MCF 10A (cell line): ENCODE measurements at regions of chr11 and their contacts with region 1.

Region 1: DNA sequence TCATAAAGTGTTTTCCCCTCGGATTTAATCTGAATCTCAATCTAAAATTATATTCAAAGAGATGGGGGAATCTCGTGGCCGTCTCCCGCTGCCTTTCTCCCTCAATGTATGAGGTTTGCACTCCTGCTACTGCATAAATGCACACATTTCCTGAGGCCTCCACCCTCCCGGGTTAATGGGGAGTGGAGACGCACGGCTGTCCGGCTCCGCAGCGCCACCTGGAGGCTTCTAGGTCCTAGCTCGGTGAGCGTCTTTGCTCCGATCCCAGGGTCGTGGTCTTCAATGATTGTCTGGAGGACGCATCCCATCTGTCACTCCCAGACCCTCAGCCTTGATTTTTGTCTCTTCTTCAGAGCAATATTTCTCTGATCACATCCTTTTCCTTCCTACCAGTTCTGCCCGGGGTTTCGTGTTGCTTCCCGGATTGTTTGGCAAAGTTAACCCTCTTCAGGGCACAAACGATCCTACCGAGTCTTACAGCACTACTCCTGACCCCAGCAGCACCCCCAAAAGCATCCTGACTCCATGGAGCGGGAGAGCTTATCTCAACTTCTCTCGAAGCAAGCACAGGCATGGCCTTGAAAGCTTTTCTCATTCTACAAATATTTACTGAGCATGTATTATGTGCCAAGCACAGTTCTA is at the start of gene LMO1:
- DNase-seq: peak; percentile 79
- H3K4me3 Mint-ChIP-seq: peak within 1 kb of the TSS; percentile 61
- H3K27ac Mint-ChIP-seq: no peak within 1 kb of the TSS
- H3K4me1 Mint-ChIP-seq: peaks cover 12% of the 10 kb centered on the region
- H3K27me3 Mint-ChIP-seq: peaks cover 12% of the 10 kb centered on the region
- CTCF ChIP-seq: peak; percentile 86
- total RNA-seq, gene LMO1: not detected in 2 replicates

Region 2: DNA sequence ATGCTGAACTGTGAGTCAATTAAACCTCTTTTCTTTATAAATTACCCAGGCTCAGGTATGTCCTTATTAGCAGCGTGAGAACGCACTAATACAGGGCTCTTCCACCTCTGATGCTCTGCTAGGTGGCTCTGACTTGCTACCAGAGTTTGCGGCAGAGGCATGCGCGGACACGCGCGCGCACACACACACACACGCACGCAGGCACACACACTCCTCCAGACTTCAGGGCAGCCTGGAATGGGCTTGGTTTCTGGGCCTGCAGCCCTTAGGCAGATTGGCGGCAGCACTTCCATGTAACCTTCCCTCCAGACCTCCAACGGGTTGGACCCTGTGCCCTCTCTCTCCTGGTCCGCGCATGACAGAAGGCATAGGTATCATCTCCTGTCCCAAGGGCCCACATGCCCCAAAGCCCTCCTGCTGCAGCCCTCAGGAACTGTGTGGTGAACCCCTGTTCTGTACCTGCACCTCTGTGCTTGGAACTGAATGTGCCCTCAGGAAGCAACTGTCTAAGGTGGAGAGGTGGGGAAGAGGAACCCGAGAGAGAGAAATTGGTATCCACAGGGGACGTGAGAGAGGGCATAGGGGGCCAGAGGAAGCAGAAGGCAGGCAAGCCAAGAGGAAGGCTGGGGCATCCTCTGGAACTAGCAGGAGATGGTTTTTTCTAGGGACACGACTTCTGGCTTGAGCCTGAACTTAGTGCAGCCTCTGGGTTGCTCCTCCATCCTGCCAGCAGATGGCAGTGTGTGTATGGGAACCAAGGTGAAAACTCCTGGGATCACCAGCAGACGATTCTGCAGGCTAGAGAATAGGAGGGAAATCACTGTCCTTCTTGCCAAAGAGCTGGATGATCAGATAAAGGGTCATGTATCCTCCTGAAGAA is 71.6 kb before region 1 on chr11:
- CTCF ChIA-PET with region 1: interaction called, 18 read pairs
- POLR2A ChIA-PET with region 1: no interaction called
- intact Hi-C with region 1: loop called (anchors 2 kb)
- DNase-seq: peak; percentile 75
- H3K4me3 Mint-ChIP-seq: no peak overlapping the region
- H3K27ac Mint-ChIP-seq: no peak overlapping the region
- H3K4me1 Mint-ChIP-seq: no peaks in the 10 kb centered on the region
- H3K27me3 Mint-ChIP-seq: peaks cover 36% of the 10 kb centered on the region
- CTCF ChIP-seq: peak; percentile 84

Region 3: DNA sequence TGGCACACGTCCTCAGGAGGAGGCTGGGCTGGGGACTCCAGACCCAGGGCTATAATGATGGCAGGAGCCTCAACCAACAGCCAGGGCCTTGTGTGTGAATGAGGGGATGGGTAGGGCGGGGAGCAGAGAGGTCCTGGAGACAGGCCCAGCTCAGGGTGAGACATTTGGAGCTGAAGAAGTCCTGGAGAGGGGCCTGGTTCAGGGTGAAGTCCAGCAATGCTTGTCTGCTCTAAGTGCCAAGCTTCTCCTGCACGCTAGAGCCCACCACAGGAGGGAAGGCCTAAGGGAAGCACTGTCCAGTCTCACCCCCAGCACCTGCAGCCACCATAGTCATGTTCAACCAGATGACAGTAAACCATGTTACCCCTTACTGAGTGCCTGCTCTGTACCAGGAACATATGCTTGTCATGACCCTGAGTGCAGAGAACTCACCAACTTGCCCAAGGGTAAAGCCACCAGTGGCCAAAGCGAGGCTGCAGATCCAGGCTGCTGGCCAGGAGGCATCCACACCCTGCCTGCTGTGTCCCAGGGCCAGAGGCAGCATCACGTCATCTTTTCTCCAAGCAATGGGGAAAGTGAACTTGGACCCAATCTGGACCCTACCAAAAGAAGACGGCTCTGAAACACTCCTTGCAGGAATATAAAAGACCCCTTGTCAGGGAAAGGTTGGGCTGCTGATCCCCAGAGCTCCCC is 24.2 kb before region 1 on chr11:
- CTCF ChIA-PET with region 1: interaction called, 398 read pairs
- POLR2A ChIA-PET with region 1: interaction called, 4 read pairs
- intact Hi-C with region 1: no loop called
- DNase-seq: no peak
- H3K4me3 Mint-ChIP-seq: no peak overlapping the region
- H3K27ac Mint-ChIP-seq: no peak overlapping the region
- H3K4me1 Mint-ChIP-seq: peaks cover 3% of the 10 kb centered on the region
- H3K27me3 Mint-ChIP-seq: peaks cover 18% of the 10 kb centered on the region
- CTCF ChIP-seq: no peak

Region 4: DNA sequence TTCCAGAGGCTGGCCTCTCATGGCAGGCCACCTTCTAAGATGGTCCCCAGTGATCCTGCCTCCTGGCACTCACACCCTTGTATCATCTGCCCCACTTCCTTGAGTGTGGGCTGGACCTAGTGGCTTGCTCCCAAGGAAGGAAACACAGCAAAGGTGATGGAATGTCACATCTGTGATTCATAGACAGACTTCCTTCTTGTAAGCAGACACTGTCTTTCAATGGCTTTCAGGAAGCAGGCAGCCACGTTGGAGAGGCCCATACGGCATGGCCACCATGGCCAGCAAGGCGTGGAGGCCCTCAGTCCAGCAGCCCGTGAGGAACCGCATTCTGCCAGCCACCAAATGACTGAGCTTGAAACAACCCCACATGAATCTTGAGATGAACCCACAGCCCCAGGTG is 11.5 kb before region 1 on chr11:
- CTCF ChIA-PET with region 1: interaction called, 42 read pairs
- POLR2A ChIA-PET with region 1: interaction called, 6 read pairs
- intact Hi-C with region 1: loop called (anchors 1 kb)
- DNase-seq: no peak
- H3K4me3 Mint-ChIP-seq: no peak overlapping the region
- H3K27ac Mint-ChIP-seq: no peak overlapping the region
- H3K4me1 Mint-ChIP-seq: no peaks in the 10 kb centered on the region
- H3K27me3 Mint-ChIP-seq: no peaks in the 10 kb centered on the region
- CTCF ChIP-seq: no peak

Region 5: DNA sequence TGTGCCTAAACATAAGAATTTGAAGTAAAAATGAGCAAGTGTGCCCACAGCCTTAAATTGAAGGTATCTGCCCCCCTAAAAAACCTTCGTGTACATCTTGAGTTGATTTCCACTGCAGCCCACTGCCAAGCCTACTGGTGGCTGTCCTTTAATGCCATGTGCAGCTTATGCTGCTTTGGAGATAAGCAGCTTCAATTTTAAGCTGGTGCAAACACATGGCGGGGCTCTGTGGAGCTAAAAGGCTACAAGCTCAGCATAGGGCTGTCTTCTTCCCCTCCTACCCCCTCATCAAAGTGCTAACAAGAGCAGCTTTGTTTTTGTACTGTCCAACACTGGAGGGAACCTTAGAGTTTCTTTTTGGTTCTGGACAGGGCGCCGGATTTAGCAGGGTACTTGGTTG is 128.3 kb after region 1 on chr11:
- CTCF ChIA-PET with region 1: no interaction called
- POLR2A ChIA-PET with region 1: no interaction called
- intact Hi-C with region 1: no loop called
- DNase-seq: no peak
- H3K4me3 Mint-ChIP-seq: no peak overlapping the region
- H3K27ac Mint-ChIP-seq: no peak overlapping the region
- H3K4me1 Mint-ChIP-seq: no peaks in the 10 kb centered on the region
- H3K27me3 Mint-ChIP-seq: peaks cover 78% of the 10 kb centered on the region
- CTCF ChIP-seq: no peak

Region 6: GRCh38 chr11:8477680-8478079 is 213.8 kb after region 1 on chr11:
- CTCF ChIA-PET with region 1: no interaction called
- POLR2A ChIA-PET with region 1: no interaction called
- intact Hi-C with region 1: no loop called
- DNase-seq: no peak
- H3K4me3 Mint-ChIP-seq: no peak overlapping the region
- H3K27ac Mint-ChIP-seq: no peak overlapping the region
- H3K4me1 Mint-ChIP-seq: no peaks in the 10 kb centered on the region
- H3K27me3 Mint-ChIP-seq: peaks cover 65% of the 10 kb centered on the region
- CTCF ChIP-seq: no peak

Region 7: GRCh38 chr11:8558436-8558835 is 294.5 kb after region 1 on chr11:
- CTCF ChIA-PET with region 1: interaction called, 12 read pairs
- POLR2A ChIA-PET with region 1: no interaction called
- intact Hi-C with region 1: no loop called
- DNase-seq: no peak
- H3K4me3 Mint-ChIP-seq: no peak overlapping the region
- H3K27ac Mint-ChIP-seq: no peak overlapping the region
- H3K4me1 Mint-ChIP-seq: no peaks in the 10 kb centered on the region
- H3K27me3 Mint-ChIP-seq: peaks cover 75% of the 10 kb centered on the region
- CTCF ChIP-seq: no peak